HCT116 (cell line): ENCODE measurements at regions of chr6 and their contacts with region 1.

Region 1: GRCh38 chr6:98845211-98846020 is 11.0 kb downstream of the POU3F2 start:
- DNase-seq: peak; percentile 34
- ATAC-seq: peak; percentile 97
- H3K4me3 ChIP-seq: no peak overlapping the region
- H3K27ac ChIP-seq: no peak overlapping the region
- H3K4me1 ChIP-seq: no peaks in the 10 kb centered on the region
- H3K27me3 ChIP-seq: no peaks in the 10 kb centered on the region
- CTCF ChIP-seq: peak; percentile 57 to 91 (median 84); a peak in 5 of 6 replicates
- POLR2A ChIP-seq: no peak
- RAD21 ChIP-seq: peak; percentile 80

Region 2: DNA sequence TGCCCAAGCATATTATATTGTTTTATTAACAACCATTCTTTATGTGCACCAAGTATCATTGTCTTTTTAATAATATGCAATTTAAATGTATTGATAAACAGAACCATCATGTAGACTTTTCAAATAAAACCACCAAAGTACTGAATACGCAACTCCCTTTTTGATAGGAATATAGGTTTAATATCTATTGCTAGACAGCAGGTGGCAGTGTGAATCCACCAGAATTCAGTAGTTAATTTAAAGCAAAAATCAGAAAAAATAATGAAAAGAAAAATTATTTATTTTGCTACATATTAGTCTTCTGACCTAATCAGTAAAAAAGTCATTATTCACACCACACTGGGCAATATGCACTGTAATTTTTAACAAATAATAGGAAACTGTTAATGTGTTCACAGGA is 1777.2 kb before region 1 on chr6:
- CTCF ChIA-PET with region 1: no interaction called
- POLR2A ChIA-PET with region 1: no interaction called
- RAD21 ChIA-PET with region 1: no interaction called
- intact Hi-C with region 1: loop called (anchors 5 kb)
- DNase-seq: peak; percentile 12
- ATAC-seq: no peak
- H3K4me3 ChIP-seq: no peak overlapping the region
- H3K27ac ChIP-seq: no peak overlapping the region
- H3K4me1 ChIP-seq: peaks cover 0 to 8% of the 10 kb centered on the region in 2 experiments; a peak in 1 of 4 replicates
- H3K27me3 ChIP-seq: no peaks in the 10 kb centered on the region
- CTCF ChIP-seq: peak; percentile 28 to 56 (median 54); a peak in 4 of 6 replicates
- POLR2A ChIP-seq: no peak
- RAD21 ChIP-seq: peak; percentile 75

Region 3: GRCh38 chr6:97186416-97186999 is 1658.9 kb before region 1 on chr6:
- CTCF ChIA-PET with region 1: no interaction called
- POLR2A ChIA-PET with region 1: no interaction called
- RAD21 ChIA-PET with region 1: no interaction called
- intact Hi-C with region 1: loop called (anchors 10 kb)
- DNase-seq: peak; percentile 42
- ATAC-seq: peak; percentile 90
- H3K4me3 ChIP-seq: no peak overlapping the region
- H3K27ac ChIP-seq: no peak overlapping the region
- H3K4me1 ChIP-seq: no peaks in the 10 kb centered on the region
- H3K27me3 ChIP-seq: no peaks in the 10 kb centered on the region
- CTCF ChIP-seq: peak; percentile 65 to 97 (median 87); a peak in 5 of 6 replicates
- POLR2A ChIP-seq: no peak
- RAD21 ChIP-seq: peak; percentile 77